Head of caudate nucleus (tissue), 42 donors: ENCODE measurements at regions of chr22 and their contacts with region 1.

Region 1: DNA sequence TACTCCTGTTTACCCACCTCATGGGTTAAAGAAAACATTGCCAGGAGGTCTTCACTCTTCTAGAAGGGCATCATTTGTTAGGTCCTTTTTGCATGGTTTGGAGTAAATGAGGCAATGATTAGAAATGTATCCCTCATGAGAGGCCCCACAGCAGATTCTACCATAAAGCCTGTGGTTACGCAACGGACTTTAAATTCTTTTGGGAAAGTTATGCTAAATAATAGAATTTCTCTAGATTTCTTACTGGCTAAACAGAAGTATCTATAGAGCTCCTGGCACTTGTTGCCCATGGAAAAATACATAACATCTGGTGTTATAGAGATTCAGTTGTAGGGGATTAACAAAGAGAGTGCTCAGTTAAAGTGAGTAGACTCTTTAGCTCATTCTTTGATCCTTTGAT is 15.1 kb upstream of the ATXN10 start:
- DNase-seq: no peak

Region 2: DNA sequence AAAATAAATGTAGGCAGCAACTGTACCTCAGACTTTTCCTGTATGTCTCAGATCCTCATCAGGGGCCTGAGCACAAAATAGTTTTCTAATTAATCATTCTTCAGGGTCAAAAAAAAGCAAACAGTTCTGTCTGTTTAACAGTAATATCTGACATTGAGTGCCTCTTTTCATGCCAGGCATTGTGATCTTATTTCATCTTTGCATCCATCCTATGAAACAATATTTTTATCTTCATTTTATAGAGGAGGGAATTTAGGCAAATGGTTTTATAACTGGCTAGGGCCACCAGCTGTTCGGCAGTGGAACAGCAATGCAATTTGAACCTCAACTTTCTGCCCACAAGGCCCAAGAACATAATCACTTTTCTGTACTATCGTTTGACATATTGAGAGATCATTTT is 174.8 kb after region 1 on chr22:
- intact Hi-C with region 1: loop called (anchors 10 kb)
- DNase-seq: no peak